ENCODE measurements at regions of chr14 and their contacts with region 1.

Region 1: GRCh38 chr14:66624299-66624937 is 116.5 kb downstream of the GPHN start:
- DNase-seq: no peak
- H3K4me3 Mint-ChIP-seq: no peak overlapping the region
- H3K27ac Mint-ChIP-seq: no peak overlapping the region
- H3K4me1 Mint-ChIP-seq: no peaks in the 10 kb centered on the region
- H3K27me3 Mint-ChIP-seq: no peaks in the 10 kb centered on the region

Region 2: GRCh38 chr14:66610154-66610563 is 14.3 kb before region 1 on chr14:
- intact Hi-C with region 1: no loop called
- DNase-seq: no peak
- H3K4me3 Mint-ChIP-seq: no peak overlapping the region
- H3K27ac Mint-ChIP-seq: no peak overlapping the region
- H3K4me1 Mint-ChIP-seq: peaks cover 16% of the 10 kb centered on the region
- H3K27me3 Mint-ChIP-seq: peaks cover 12% of the 10 kb centered on the region

Region 3: DNA sequence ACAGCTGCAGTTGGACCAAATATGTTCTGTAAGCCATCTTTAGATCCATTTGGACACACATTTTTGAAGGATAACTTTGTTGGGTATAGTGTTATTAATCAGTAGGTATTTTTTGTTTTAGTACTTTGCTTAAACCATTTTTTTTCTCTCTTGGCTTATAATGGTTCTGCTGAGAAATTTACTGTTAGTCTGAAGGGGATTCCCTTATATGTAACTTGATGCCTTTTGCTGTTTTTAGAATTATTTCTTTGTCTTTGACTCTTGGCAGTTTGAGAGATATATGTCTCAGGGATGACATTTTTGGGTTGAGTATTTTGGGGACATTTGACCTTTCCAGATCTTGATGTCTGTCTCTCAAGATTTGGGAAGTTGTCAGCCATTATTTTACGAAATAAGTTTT is 53.4 kb after region 1 on chr14:
- intact Hi-C with region 1: no loop called
- DNase-seq: no peak
- H3K4me3 Mint-ChIP-seq: no peak overlapping the region
- H3K27ac Mint-ChIP-seq: no peak overlapping the region
- H3K4me1 Mint-ChIP-seq: no peaks in the 10 kb centered on the region
- H3K27me3 Mint-ChIP-seq: no peaks in the 10 kb centered on the region

Region 4: GRCh38 chr14:67111022-67111421 is 486.6 kb after region 1 on chr14:
- intact Hi-C with region 1: loop called (anchors 5 kb)
- DNase-seq: no peak
- H3K4me3 Mint-ChIP-seq: no peak overlapping the region
- H3K27ac Mint-ChIP-seq: no peak overlapping the region
- H3K4me1 Mint-ChIP-seq: no peaks in the 10 kb centered on the region
- H3K27me3 Mint-ChIP-seq: no peaks in the 10 kb centered on the region

Measured in activated T-helper 2 cell treated with anti-CD3 and anti-CD28 coated beads, Interferon-gamma antibody, Interleukin-2, Interleukin-4, amounts not matched to agents 10 μg/mL and 5 μg/mL and 100 μg/mL, durations not matched to agents 14 hours and 24 hours and 36 hours (primary cell).